ENCODE measurements at regions of chr9 and their contacts with region 1.

Region 1: DNA sequence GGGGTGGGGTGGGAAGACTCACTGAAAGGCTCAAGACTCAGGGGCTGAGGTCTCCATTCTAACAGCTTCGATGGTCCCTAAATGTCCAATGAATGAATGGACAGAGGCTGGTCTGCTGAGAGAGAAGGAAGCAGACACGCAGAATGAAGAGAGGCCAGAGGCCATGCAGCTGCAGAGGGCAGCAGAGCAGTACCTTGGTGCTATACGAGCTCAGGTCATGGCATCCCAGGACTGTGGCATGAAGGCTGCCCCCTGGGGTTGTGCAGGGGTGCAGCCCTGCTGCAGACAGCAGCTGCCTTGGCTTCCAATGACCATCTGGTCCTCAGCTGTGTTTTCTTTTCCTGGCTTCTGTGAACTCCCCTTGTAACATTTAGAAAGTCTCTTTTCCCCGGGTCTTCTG is 15.2 kb upstream of the CORO2A start:
- DNase-seq: no peak
- ATAC-seq: no peak
- H3K4me3 ChIP-seq: no peak overlapping the region
- H3K27ac ChIP-seq: no peak overlapping the region
- H3K4me1 ChIP-seq: peaks cover 11 to 22% of the 10 kb centered on the region in 2 experiments; a peak in 4 of 5 replicates
- H3K27me3 ChIP-seq: no peaks in the 10 kb centered on the region
- CTCF ChIP-seq: peak; percentile 41 to 50 (median 43); a peak in 5 of 6 replicates
- EP300 ChIP-seq: no peak
- POLR2A ChIP-seq: no peak
- RAD21 ChIP-seq: peak in 1 of 2 experiments; percentile 42; a peak in 2 of 4 replicates

Region 2: GRCh38 chr9:97710356-97711222 is 497.0 kb before region 1 on chr9:
- CTCF ChIA-PET with region 1: no interaction called
- POLR2A ChIA-PET with region 1: no interaction called
- in situ Hi-C with region 1: no loop called
- intact Hi-C with region 1: no loop called
- DNase-seq: peak; percentile 75 to 80 (median 78)
- ATAC-seq: peak; percentile 95
- H3K4me3 ChIP-seq: no peak overlapping the region
- H3K27ac ChIP-seq: no peak overlapping the region
- H3K4me1 ChIP-seq: peaks cover 0 to 7% of the 10 kb centered on the region in 2 experiments; a peak in 3 of 5 replicates
- H3K27me3 ChIP-seq: peaks cover 0 to 5% of the 10 kb centered on the region in 2 experiments; a peak in 1 of 5 replicates
- CTCF ChIP-seq: peak; percentile 75 to 87 (median 85)
- EP300 ChIP-seq: no peak
- POLR2A ChIP-seq: no peak
- RAD21 ChIP-seq: peak; percentile 84 to 92

Region 3: GRCh38 chr9:98074115-98074990 is 133.3 kb before region 1 on chr9:
- CTCF ChIA-PET with region 1: interaction called, 6 read pairs
- POLR2A ChIA-PET with region 1: no interaction called
- in situ Hi-C with region 1: no loop called
- intact Hi-C with region 1: loop called (anchors 2 kb)
- DNase-seq: peak; percentile 62 to 78 (median 68)
- ATAC-seq: peak; percentile 84
- H3K4me3 ChIP-seq: no peak overlapping the region
- H3K27ac ChIP-seq: peak overlapping the region; percentile 4; the same call in 2 of the 3 replicates
- H3K4me1 ChIP-seq: peaks cover 4% of the 10 kb centered on the region in 2 experiments; a peak in 2 of 5 replicates
- H3K27me3 ChIP-seq: no peaks in the 10 kb centered on the region
- CTCF ChIP-seq: peak; percentile 89 to 97 (median 94)
- EP300 ChIP-seq: no peak
- POLR2A ChIP-seq: no peak
- RAD21 ChIP-seq: peak; percentile 78 to 79

Region 4: DNA sequence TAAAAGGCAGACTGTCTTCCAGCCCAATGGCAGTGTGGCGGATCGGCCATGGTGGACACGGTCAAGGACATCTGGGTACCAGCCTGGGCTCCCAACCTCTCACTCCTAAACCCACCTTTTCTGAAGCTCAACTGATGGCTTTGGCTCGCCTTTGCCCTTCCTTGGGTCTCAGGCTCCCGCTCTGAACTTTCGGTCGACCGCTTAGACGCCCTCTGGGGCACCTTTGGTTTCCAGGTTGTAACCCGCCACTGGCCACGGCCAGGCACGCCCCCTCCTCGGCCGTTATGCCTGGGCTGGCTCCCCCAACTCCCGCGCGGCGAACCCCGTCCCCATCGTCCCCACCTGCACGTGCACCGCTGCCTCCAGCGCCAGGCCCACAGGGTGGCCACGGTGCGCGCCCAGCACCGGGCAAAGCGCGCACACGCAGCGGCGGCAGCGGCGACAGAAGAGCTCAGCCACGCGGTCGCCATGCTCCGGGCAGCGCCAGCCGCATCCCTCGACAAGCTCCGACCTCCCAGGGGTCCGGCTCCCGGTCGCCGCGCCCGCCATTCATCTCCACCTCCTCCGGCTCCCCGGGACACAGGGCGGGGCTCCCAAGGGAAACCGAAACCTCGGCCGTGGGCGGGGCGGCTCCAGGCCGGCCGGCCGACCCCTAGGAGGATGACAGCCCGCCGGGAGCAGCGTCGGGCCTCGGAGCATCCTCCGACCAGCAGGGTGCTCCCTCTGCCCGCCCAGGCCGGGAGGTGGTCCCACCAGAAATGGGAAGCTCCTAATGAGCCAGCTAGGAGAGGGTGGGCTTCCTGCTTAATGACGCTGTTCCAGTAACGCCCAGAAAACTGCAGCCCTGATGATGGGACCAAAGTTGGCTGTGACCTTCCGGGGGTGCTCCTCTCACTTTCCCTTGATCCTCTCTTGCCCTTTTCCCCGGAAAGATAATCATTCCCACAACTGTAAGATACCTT is 88.7 kb before region 1 on chr9 and contains the start of gene TRIM14:
- CTCF ChIA-PET with region 1: interaction called, 3 read pairs
- POLR2A ChIA-PET with region 1: no interaction called
- in situ Hi-C with region 1: loop called (anchors 5 kb)
- intact Hi-C with region 1: loop called (anchors 2 kb)
- DNase-seq: peak; percentile 83 to 91 (median 88)
- ATAC-seq: peak; percentile 87
- H3K4me3 ChIP-seq: peak within 1 kb of the TSS; percentile 76
- H3K27ac ChIP-seq: peak within 1 kb of the TSS; percentile 67
- H3K4me1 ChIP-seq: peaks cover 14 to 22% of the 10 kb centered on the region in 2 experiments; a peak in 4 of 5 replicates
- H3K27me3 ChIP-seq: no peaks in the 10 kb centered on the region
- CTCF ChIP-seq: peak; percentile 7 to 49 (median 42); a peak in 5 of 6 replicates
- EP300 ChIP-seq: no peak
- POLR2A ChIP-seq: peak; percentile 67
- RAD21 ChIP-seq: peak in 1 of 2 experiments; percentile 65; a peak in 3 of 4 replicates
- polyA plus RNA-seq, gene TRIM14: 7.6 to 8.3 TPM

Region 5: DNA sequence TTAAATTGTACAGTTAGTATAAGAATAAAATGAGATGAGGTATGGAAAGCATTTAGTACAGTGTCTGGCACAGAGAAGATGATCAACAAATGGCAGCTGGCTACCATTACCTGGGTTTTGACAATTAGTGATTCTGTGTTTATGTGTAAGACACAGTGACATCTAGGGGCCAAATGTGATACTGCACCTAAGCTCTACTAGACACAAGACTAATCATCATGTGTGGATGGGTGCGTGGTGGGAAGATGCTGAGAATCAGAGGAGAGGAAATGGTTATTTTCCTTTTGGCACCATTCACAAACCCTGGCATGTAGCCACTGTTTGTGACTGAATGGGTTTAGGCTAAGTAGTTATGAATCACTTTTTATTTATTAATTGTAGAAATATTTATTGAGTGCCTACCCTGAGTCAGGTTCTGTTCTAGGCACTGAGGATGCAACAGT is 157.6 kb after region 1 on chr9:
- CTCF ChIA-PET with region 1: no interaction called
- POLR2A ChIA-PET with region 1: no interaction called
- in situ Hi-C with region 1: no loop called
- intact Hi-C with region 1: loop called (anchors 5 kb)
- DNase-seq: peak; percentile 49 to 74 (median 55)
- ATAC-seq: no peak
- H3K4me3 ChIP-seq: no peak overlapping the region
- H3K27ac ChIP-seq: no peak overlapping the region
- H3K4me1 ChIP-seq: peaks cover 15 to 19% of the 10 kb centered on the region in 2 experiments
- H3K27me3 ChIP-seq: no peaks in the 10 kb centered on the region
- CTCF ChIP-seq: peak; percentile 54 to 78 (median 63)
- EP300 ChIP-seq: no peak
- POLR2A ChIP-seq: no peak
- RAD21 ChIP-seq: peak; percentile 19 to 72; a peak in 3 of 4 replicates

Region 6: GRCh38 chr9:98429613-98430012 is 222.0 kb after region 1 on chr9:
- CTCF ChIA-PET with region 1: no interaction called
- POLR2A ChIA-PET with region 1: no interaction called
- in situ Hi-C with region 1: no loop called
- intact Hi-C with region 1: no loop called
- DNase-seq: peak in 2 of 4 experiments; percentile 31 to 49
- ATAC-seq: peak; percentile 71
- H3K4me3 ChIP-seq: no peak overlapping the region
- H3K27ac ChIP-seq: peak overlapping the region; percentile 63; the same call in 2 of the 3 replicates
- H3K4me1 ChIP-seq: peaks cover 13 to 31% of the 10 kb centered on the region in 2 experiments; a peak in 4 of 5 replicates
- H3K27me3 ChIP-seq: no peaks in the 10 kb centered on the region
- CTCF ChIP-seq: no peak
- EP300 ChIP-seq: 0 out of 2 replicates have a peak, but pooled peaks have one; percentile 28
- POLR2A ChIP-seq: no peak
- RAD21 ChIP-seq: peak in 1 of 2 experiments; percentile 30; a peak in 2 of 4 replicates